Transverse colon (tissue), 4 donors: ENCODE measurements at regions of chr7 and their contacts with region 1.

Region 1: DNA sequence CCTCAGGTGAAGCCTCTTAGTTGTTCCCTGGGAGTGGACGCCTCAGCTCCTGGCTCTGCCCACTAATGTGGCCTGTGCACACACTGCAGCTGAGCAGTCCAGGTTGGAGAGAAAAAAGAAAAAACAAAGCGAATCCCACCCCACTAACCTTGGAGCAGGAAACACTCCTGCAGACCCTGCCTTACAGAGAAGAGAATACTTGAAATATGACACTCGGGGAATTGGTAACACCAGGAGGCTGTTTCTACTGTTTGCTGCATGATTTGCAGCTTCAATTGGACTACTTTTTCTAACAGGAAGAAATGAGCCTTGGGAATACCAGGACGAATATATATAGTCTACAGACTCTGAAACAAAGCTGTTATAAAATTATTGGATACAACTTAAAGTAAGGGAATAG is 22.2 kb downstream of the CDHR3 start:
- DNase-seq: no peak
- H3K4me3 ChIP-seq: no peak overlapping the region
- H3K27ac ChIP-seq: no peak overlapping the region
- H3K4me1 ChIP-seq: no peaks in the 10 kb centered on the region
- H3K27me3 ChIP-seq: no peaks in the 10 kb centered on the region
- CTCF ChIP-seq: no peak
- EP300 ChIP-seq: no peak
- POLR2A ChIP-seq: no peak

Region 2: DNA sequence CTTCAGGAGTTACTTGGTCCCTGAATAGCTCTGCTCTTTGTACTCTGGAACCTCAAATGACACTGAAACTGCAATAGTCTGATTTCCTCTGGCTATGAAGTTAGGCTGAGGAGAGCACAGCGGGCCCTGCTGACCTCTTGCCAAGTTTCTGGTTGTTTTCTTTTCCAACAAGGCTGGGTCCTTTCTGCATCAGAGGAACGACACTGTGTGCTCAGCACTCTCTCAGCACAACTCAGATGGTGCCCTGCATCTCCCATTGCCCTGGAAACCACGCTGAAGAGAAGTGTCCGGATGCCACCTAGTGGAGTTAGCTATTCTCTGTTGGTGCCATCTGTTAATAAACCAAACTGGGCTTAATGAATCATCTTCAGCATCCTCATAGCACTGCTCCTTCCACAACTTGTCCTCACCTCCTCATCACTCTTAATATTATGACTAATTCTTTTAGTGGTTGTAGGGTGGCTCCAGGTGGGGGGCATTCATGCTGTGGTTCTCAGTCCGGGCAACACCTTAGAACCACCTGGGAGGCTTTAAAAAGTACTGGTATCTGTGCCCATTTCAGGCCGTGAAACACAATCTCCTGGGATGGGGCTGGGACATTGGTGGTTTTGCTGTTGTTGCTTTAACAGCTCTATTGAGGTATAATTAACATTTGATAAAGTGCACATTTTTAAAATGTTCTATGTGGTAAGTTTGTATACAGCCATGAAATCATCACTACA is 395.7 kb before region 1 on chr7:
- in situ Hi-C with region 1: no loop called
- intact Hi-C with region 1: no loop called
- DNase-seq: peak; percentile 35
- H3K4me3 ChIP-seq: no peak overlapping the region
- H3K27ac ChIP-seq: no peak overlapping the region
- H3K4me1 ChIP-seq: peaks cover 0 to 5% (median 0%) of the 10 kb centered on the region in 4 donors
- H3K27me3 ChIP-seq: no peaks in the 10 kb centered on the region
- CTCF ChIP-seq: peak; percentile 31 to 47 (median 42)
- EP300 ChIP-seq: no peak
- POLR2A ChIP-seq: no peak

Region 3: DNA sequence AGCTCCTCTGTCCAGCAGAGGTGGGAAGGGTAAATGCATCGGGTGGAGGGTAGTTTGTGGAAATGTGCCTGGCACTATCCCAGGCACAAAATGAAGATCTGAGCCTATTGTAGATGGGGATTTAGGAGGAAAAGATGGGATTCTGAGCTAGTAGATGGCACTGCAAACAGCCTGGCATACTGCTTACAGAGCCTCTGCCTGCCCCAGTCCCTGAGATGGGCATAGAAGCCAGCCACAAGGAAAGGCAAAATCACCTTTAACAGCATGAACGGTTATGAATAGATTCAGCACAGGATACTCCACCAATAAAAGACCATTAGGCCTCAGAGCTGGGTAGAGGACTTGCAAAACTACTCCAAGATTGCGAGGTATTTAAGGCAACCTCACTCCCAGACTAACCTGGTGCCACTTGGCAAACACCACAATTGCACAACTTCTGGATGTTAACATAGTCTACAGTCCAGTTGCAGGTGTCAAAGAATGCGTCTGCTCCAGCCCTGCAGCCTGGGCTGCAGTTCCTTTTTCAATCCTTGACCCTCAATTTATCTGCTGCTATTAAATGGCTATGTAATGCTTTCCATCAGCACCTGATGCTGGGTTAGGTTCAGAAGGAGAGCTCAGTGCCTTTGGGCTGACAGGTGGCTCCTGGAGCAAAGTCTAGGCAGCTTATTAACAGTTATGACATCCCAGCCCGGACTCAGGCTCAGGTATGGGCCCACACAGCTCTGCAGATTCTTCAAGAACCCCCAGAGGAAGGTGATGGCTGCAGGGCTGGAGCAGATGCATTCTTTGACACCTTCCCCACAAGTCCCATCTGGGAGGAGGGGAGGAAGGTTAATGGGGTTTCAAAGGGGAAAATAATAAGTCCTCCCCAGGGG is 11.9 kb after region 1 on chr7:
- in situ Hi-C with region 1: no loop called
- intact Hi-C with region 1: loop called (anchors 1 kb)
- DNase-seq: no peak
- H3K4me3 ChIP-seq: no peak overlapping the region
- H3K27ac ChIP-seq: no peak overlapping the region
- H3K4me1 ChIP-seq: no peaks in the 10 kb centered on the region
- H3K27me3 ChIP-seq: no peaks in the 10 kb centered on the region
- CTCF ChIP-seq: no peak
- EP300 ChIP-seq: no peak
- POLR2A ChIP-seq: no peak

Region 4: DNA sequence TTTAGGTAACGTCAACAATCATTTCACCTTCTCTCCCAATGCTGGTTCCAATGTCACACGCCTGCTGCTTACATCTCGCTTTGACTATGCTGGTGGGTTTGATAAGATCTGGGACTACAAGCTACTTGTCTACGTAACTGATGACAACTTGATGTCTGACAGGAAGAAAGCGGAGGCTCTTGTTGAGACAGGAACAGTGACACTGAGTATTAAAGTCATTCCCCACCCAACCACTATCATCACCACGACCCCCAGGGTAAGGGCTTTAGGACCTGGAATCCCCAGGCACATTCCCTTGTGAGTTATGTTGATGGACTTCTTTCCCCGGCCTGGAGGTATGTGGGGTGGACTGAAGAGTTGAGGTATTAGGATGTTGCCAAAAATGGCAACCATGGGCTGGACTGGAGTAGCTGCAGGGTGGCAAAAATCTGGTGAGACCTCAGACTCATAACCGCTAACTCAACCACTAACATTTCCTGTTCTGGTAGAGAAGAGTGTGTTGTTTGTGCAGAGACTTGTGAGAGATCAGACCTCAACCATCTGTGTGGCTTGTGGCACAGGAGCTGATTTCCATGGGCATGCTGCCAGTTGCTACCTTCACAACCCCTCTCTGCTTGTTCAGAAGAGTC is 37.1 kb after region 1 on chr7:
- in situ Hi-C with region 1: no loop called
- intact Hi-C with region 1: no loop called
- DNase-seq: peak; percentile 63
- H3K4me3 ChIP-seq: no peak overlapping the region
- H3K27ac ChIP-seq: no peak overlapping the region
- H3K4me1 ChIP-seq: no peaks in the 10 kb centered on the region
- H3K27me3 ChIP-seq: no peaks in the 10 kb centered on the region
- CTCF ChIP-seq: no peak
- EP300 ChIP-seq: no peak
- POLR2A ChIP-seq: no peak

Region 5: DNA sequence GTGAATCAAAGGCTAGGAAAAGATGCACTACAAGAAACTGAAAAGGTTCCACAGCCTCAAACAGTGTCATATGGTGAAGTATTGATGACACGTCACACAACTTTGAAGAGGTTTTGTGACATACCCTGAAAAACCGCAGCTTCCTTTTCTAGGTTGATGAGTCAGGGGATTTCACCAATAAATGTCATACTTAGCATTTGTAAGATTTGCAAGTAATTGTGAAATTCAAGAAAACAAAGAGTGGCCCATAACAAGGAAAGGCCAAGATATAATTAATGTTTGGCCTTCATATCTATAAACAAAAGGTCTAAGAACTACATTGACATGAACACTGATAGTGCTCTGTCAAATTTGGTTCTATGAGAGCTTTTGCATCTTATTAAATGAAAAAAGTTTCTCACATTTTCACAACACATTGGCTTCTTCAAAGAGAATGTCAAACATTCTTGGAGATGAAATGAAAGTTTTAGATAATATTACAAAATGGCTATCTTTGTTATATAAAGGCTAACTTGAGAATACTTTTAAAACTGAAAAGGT is 361.5 kb after region 1 on chr7:
- in situ Hi-C with region 1: no loop called
- intact Hi-C with region 1: no loop called
- DNase-seq: no peak
- H3K4me3 ChIP-seq: no peak overlapping the region
- H3K27ac ChIP-seq: no peak overlapping the region
- H3K4me1 ChIP-seq: no peaks in the 10 kb centered on the region
- H3K27me3 ChIP-seq: no peaks in the 10 kb centered on the region
- CTCF ChIP-seq: no peak
- EP300 ChIP-seq: no peak
- POLR2A ChIP-seq: no peak